ENCODE measurements at regions of chr17 and their contacts with region 1.

Region 1: DNA sequence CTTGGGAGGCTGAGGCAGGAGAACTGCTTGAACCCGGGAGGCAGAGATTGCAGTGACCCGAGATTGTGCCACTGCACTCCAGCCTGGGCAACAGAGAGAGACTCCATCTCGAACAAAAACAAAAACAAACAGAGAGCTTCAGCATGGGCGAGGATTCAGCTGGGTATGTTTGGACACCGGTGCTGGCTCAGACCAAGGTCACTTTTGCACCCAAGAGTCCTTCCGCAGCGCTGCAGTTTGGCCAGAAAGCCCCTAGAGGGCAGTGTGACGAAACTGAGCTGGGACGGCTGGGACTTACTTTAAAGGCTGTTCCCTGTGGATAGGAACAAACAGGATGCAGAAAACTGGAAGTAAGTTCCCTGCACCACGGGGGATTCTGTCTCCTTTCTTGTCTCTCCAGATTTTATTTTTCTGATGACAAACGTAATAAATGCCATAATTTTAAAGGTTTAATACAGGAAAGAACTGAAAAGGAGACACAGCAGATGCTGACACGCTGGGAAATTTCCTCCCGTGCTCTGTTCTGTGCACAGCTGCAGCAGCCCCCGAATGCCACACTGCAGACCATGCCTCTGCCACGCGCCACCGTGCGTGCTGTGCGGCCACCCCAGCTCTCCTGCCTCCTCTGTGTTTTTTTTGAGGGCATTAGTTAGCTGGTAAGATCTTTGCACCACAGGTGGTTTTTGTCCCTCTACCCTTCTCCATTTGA is 25.2 kb upstream of the USP36 start:
- DNase-seq: no peak
- H3K4me3 ChIP-seq: no peak overlapping the region
- H3K27me3 ChIP-seq: no peaks in the 10 kb centered on the region
- CTCF ChIP-seq: peak; percentile 92

Region 2: DNA sequence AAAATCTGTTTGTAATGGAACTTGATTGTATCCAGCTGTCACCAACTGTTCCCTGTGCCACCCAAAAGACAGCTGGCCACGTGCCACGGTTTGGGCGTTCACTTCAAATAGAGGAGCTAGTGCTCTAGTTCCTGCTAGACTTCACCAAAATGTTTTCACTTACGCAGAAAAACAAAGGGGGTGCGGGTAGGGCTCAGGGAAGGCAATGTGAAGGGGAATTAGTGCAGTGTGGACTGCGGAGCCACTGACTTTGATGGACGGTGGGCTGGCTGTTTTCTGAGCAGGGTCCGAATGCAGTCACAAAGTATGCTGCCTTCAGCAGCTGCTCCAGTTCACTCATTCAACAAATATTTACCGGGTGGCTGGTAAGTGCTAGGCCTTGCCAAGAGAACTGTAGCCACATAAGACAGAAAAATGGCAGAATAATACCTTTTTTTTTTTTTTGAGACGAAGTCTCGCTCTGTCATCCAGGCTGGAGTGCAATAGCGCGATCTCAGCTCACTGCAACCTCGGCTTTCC is 76.1 kb before region 1 on chr17:
- CTCF ChIA-PET with region 1: no interaction called
- POLR2A ChIA-PET with region 1: no interaction called
- DNase-seq: peak; percentile 36
- H3K4me3 ChIP-seq: no peak overlapping the region
- H3K27me3 ChIP-seq: no peaks in the 10 kb centered on the region
- CTCF ChIP-seq: no peak

Region 3: DNA sequence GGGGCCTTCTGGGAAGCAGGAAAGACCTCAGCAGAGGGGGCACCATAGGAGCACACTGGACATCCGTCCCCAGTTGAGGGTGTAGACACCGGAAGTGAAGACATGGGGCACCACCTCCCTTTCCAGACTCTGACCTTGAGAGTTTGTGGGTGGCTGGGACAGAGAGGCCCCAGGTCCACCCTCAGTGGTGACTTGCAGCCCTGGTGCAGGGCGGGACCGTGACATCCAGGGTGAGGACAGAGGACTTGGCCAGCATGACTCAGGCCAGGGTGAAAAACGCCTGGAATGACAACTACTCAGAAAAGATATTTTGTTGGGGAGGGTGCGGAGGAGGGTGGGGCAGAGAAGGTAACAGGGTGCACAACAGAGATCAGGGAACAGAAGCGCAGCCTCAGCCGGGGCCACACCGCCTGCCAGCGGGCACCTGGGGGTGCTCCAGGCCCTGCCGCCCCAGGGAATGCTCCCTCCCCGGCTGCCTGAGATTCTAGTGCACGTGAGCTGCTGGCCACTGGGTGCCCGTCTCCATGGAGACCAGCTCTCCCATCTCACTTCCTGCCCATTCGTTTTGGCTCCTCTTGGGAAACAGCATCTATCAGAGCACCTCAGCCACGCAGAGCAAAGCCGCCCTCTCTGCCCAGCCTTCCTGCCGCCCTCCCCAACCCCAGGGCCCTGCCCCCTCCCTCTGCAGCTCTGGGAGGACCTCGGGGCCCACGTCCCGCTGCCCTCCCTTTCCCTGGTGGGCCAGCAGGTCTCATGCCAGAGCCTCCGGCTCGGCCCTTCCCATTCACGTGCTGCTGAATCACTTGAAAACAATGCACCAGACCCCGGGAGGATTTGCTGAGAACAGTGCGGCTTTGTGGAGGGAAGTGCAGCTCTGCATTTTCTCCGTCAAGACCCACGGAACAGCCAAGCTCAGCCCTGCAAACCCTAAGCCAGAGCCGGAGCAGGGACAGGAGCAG is 17.6 kb after region 1 on chr17:
- CTCF ChIA-PET with region 1: interaction called, 19 read pairs
- POLR2A ChIA-PET with region 1: interaction called, 4 read pairs
- DNase-seq: peak; percentile 88
- H3K4me3 ChIP-seq: peak overlapping the region; percentile 31
- H3K27me3 ChIP-seq: no peaks in the 10 kb centered on the region
- CTCF ChIP-seq: no peak

Region 4: GRCh38 chr17:80755650-80756405 is 1890.0 kb after region 1 on chr17:
- CTCF ChIA-PET with region 1: no interaction called
- POLR2A ChIA-PET with region 1: interaction called, 13 read pairs
- DNase-seq: no peak
- H3K4me3 ChIP-seq: no peak overlapping the region
- H3K27me3 ChIP-seq: no peaks in the 10 kb centered on the region
- CTCF ChIP-seq: peak; percentile 38